ENCODE measurements at regions of chrX and their contacts with region 1.

Region 1: GRCh38 chrX:154458114-154458953 is at the start of gene PLXNA3:
- DNase-seq: peak; percentile 46
- ATAC-seq: peak; percentile 64
- H3K4me3 ChIP-seq: peak within 1 kb of the TSS; percentile 82
- H3K27ac ChIP-seq: no peak within 1 kb of the TSS
- H3K4me1 ChIP-seq: no peaks in the 10 kb centered on the region
- H3K27me3 ChIP-seq: no peaks in the 10 kb centered on the region
- CTCF ChIP-seq: no peak
- total RNA-seq, gene PLXNA3: 5.3 and 21.8 TPM in 2 replicates

Region 2: GRCh38 chrX:154397819-154398724 is 60.3 kb before region 1 on chrX and contains the start of gene RPL10:
- CTCF ChIA-PET with region 1: no interaction called
- POLR2A ChIA-PET with region 1: no interaction called
- intact Hi-C with region 1: loop called (anchors 10 kb)
- DNase-seq: peak; percentile 98
- ATAC-seq: peak; percentile 56
- H3K4me3 ChIP-seq: peak within 1 kb of the TSS; percentile 90
- H3K27ac ChIP-seq: peak within 1 kb of the TSS; percentile 98
- H3K4me1 ChIP-seq: peaks cover 12% of the 10 kb centered on the region; the same call in 1 of the 2 replicates
- H3K27me3 ChIP-seq: no peaks in the 10 kb centered on the region
- CTCF ChIP-seq: no peak
- total RNA-seq, gene RPL10: 2,879 and 3,401 TPM in 2 replicates

Region 3: GRCh38 chrX:154487518-154488290 is 29.4 kb after region 1 on chrX:
- CTCF ChIA-PET with region 1: no interaction called
- POLR2A ChIA-PET with region 1: no interaction called
- intact Hi-C with region 1: no loop called
- DNase-seq: no peak
- ATAC-seq: no peak
- H3K4me3 ChIP-seq: no peak overlapping the region
- H3K27ac ChIP-seq: no peak overlapping the region
- H3K4me1 ChIP-seq: peaks cover 34% of the 10 kb centered on the region
- H3K27me3 ChIP-seq: no peaks in the 10 kb centered on the region
- CTCF ChIP-seq: no peak

Region 4: DNA sequence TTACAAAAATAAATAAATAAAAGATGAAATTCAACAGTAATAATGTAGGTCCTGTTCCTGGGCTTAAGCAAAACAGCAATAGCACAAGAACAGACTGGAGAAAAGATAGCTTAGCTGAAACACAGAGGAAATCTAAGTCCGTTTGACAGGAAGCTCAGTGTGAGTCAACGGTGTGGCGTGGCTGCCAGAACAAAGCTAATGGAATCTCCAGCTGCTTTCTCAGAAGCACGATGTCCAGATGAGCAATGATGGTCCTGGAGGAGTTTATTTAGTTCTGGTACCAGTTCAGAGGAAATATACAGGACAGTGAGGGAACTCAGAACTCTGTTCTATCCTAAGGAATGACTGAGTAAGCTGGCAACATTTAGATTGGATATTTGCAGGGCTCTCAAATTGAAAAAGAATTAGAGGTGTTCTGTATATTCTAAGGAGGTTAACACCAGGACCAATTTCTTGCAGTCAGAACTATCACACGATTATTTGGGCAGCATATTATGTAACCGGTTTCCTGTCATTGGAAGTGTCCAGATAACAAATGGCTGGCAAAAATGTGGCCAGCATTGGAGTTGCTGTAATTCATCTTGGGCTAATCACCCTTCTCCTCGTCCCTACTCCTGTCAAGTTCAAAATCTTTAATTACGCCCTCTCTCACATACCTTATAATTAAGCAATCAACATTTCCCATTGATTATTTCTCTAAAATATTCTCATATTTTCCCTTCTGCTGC is 279.8 kb after region 1 on chrX:
- CTCF ChIA-PET with region 1: no interaction called
- POLR2A ChIA-PET with region 1: no interaction called
- intact Hi-C with region 1: no loop called
- DNase-seq: peak; percentile 70
- ATAC-seq: peak; percentile 89
- H3K4me3 ChIP-seq: no peak overlapping the region
- H3K27ac ChIP-seq: peak overlapping the region; percentile 25; the same call in 1 of the 2 replicates
- H3K4me1 ChIP-seq: peaks cover 23% of the 10 kb centered on the region
- H3K27me3 ChIP-seq: no peaks in the 10 kb centered on the region
- CTCF ChIP-seq: no peak